Activated CD4-positive, alpha-beta memory T cell treated with anti-CD3 and anti-CD28 coated beads for 36 hours (primary cell): ENCODE measurements at regions of chr3 and their contacts with region 1.

Region 1: DNA sequence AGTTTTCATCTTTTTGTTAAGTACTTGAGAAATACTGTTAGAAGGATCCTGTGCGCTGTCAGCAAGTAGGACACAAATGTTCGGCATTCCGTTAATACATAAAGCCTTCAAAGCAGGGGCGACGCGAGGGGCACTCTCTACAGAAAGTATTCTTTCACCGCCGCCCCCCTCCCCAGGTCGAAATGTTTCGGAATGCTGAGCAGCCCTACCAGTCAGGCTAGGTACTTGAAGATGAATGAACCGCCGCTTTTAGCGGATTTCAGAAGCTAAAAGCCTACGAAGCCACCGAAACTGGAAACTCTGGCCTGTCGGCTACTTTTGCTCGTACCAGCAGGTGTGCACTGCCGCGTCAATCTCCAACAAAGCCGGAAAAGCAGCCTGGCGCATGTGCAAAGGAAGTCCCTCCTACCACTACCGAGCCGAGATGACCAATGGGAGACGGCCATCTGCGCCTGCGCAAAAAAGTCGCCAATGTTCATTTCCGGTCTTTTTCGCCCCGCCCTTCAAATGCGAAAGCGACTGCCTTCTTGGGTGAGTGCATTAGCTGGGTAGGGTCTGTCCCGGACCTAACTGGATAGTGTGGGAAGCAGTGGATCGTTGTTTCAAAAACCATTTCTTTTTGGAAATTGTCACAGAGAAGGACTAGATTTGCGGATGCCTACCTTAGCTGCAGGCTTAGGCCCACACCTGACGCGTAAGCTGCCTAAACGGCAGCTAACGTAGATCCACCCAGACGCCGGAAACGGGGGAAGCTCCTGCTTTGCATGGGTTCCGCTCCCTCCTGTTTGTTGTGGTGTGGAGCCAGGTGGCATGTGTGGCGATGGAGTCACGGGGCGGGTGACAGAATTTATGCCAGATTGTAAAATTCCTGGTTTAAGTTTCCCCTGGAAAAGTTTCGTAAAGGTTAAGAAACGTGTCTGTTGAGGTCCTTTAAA is at the start of gene WDR5B:
- DNase-seq: peak; percentile 99
- H3K4me3 Mint-ChIP-seq: peak within 1 kb of the TSS; percentile 91
- H3K27ac Mint-ChIP-seq: peak within 1 kb of the TSS; percentile 97
- H3K4me1 Mint-ChIP-seq: peaks cover 47% of the 10 kb centered on the region
- H3K27me3 Mint-ChIP-seq: peaks cover 1% of the 10 kb centered on the region
- total RNA-seq, gene WDR5B: 3.7 to 4.4 TPM

Region 2: DNA sequence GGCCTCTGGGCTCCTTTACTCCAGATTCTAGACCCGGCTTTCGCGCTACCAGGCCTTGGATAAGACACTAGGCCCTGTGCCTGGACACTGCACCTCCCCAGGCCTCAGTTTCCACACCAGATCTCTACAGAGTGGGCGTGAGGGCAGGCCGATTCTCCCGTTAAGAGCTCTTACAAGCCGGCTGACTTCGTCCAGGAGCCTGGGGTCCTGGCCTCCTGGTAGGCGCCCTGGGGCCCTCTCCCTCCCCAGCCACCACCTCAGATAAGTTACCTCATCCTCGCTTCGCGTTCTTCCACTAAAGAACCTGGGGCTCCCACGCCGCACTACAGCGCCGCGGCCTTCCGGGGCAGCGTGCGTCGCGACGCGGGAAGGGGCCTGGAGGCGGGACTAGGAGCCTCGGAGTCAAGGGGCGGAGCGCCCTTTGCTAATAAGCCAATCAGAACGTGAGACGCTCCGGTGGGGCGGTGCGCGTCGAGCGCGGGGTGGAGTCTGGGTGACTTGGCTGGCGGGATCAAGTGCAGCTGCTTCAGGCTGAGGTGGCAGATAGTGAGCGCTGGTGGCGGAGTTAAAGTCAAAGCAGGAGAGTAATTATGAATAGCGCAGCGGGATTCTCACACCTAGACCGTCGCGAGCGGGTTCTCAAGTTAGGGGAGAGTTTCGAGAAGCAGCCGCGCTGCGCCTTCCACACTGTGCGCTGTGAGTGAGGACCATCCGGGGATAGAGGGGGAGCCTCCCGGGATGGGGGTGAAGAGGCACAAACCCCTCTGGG is 581.1 kb before region 1 on chr3 and contains the starts of genes EAF2 and IQCB1:
- CTCF ChIA-PET with region 1: no interaction called
- POLR2A ChIA-PET with region 1: no interaction called
- intact Hi-C with region 1: loop called (anchors 1 kb)
- DNase-seq: peak; percentile 98
- H3K4me3 Mint-ChIP-seq: peak within 1 kb of the TSS; percentile 98
- H3K27ac Mint-ChIP-seq: peak within 1 kb of the TSS; percentile 84
- H3K4me1 Mint-ChIP-seq: peaks cover 37% of the 10 kb centered on the region
- H3K27me3 Mint-ChIP-seq: no peaks in the 10 kb centered on the region
- total RNA-seq, gene EAF2: 14.4 to 14.8 TPM
- total RNA-seq, gene IQCB1: 36.8 to 37.3 TPM

Region 3: GRCh38 chr3:122392868-122393844 is 22.8 kb before region 1 on chr3:
- CTCF ChIA-PET with region 1: interaction called, 10 read pairs
- POLR2A ChIA-PET with region 1: interaction called, 5 read pairs
- intact Hi-C with region 1: no loop called
- DNase-seq: peak; percentile 20
- H3K4me3 Mint-ChIP-seq: no peak overlapping the region
- H3K27ac Mint-ChIP-seq: no peak overlapping the region
- H3K4me1 Mint-ChIP-seq: peaks cover 32% of the 10 kb centered on the region
- H3K27me3 Mint-ChIP-seq: no peaks in the 10 kb centered on the region

Region 4: GRCh38 chr3:122514123-122515019 is 98.4 kb after region 1 on chr3 and contains the start of gene KPNA1:
- CTCF ChIA-PET with region 1: no interaction called
- POLR2A ChIA-PET with region 1: interaction called, 11 read pairs
- intact Hi-C with region 1: loop called (anchors 1 kb)
- DNase-seq: peak; percentile 91
- H3K4me3 Mint-ChIP-seq: peak within 1 kb of the TSS; percentile 77
- H3K27ac Mint-ChIP-seq: peak within 1 kb of the TSS; percentile 85
- H3K4me1 Mint-ChIP-seq: peaks cover 39% of the 10 kb centered on the region
- H3K27me3 Mint-ChIP-seq: no peaks in the 10 kb centered on the region
- total RNA-seq, gene KPNA1: 43.4 to 46.0 TPM